ENCODE measurements at regions of chr12 and their contacts with region 1.

Region 1: GRCh38 chr12:122087431-122088178 is 9.0 kb downstream of the MLXIP start:
- DNase-seq: no peak
- ATAC-seq: peak; percentile 49; the same call in 1 of the 2 replicates
- H3K4me3 ChIP-seq: no peak overlapping the region
- H3K27ac ChIP-seq: peak overlapping the region; percentile 30
- H3K4me1 ChIP-seq: peaks cover 63% of the 10 kb centered on the region
- H3K27me3 ChIP-seq: no peaks in the 10 kb centered on the region
- CTCF ChIP-seq: no peak

Region 2: GRCh38 chr12:122097927-122098756 is 10.5 kb after region 1 on chr12:
- CTCF ChIA-PET with region 1: interaction called, 3 read pairs
- POLR2A ChIA-PET with region 1: interaction called, 12 read pairs
- in situ Hi-C with region 1: no loop called
- intact Hi-C with region 1: no loop called
- DNase-seq: no peak
- ATAC-seq: peak; percentile 89
- H3K4me3 ChIP-seq: peak overlapping the region in 1 of 2 experiments; percentile 31; a peak in 2 of 4 replicates
- H3K27ac ChIP-seq: peak overlapping the region; percentile 96
- H3K4me1 ChIP-seq: peaks cover 66% of the 10 kb centered on the region
- H3K27me3 ChIP-seq: no peaks in the 10 kb centered on the region
- CTCF ChIP-seq: no peak

Region 3: GRCh38 chr12:122726080-122726558 is 638.5 kb after region 1 on chr12:
- CTCF ChIA-PET with region 1: no interaction called
- POLR2A ChIA-PET with region 1: no interaction called
- in situ Hi-C with region 1: no loop called
- intact Hi-C with region 1: no loop called
- DNase-seq: peak; percentile 12
- ATAC-seq: 0 out of 2 replicates have a peak, but pooled peaks have one; percentile 31
- H3K4me3 ChIP-seq: no peak overlapping the region
- H3K27ac ChIP-seq: no peak overlapping the region
- H3K4me1 ChIP-seq: peaks cover 8% of the 10 kb centered on the region
- H3K27me3 ChIP-seq: no peaks in the 10 kb centered on the region
- CTCF ChIP-seq: no peak